MCF 10A (cell line): ENCODE measurements at regions of chr2 and their contacts with region 1.

Region 1: DNA sequence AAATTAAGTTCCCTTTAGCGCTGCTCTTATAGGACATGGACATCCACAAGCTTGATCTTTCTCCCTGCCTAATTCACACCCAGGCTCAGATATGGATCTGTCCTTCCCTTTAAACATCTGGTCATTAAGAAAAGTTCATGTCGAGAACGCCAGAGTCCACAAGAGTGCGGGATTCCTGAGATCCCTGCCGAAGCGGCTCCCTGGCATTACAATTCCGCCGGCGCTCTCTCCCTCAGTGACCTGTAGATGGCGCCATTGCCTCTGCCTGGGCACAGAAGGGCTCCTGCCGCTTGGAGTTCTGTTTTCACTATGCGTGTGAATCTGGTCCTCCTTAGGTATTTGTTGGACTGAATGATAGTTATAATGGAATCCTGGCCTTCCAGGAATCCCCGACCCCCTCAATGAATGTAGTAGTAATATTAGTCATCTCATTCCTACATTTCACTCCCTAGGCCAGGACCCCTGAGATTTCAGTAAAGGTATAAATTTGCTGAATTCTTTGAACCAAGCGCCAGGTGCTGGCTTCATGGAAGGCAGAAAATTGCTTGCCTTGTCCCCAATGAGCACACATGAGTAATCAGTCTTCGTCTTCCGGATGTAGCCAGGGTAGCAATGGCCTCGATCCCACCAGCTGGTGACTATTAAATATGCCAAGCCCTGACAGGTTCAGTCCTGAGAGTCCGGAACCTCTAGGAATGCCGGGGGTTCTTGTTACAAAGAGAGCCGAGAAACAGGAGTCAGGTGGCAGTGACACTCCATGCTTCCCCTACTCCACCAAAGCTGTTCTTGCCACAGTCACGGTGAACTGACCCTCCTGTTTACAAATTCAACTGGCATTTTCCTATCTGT is 26.4 kb upstream of the CD207 start:
- DNase-seq: peak; percentile 83
- H3K4me3 Mint-ChIP-seq: no peak overlapping the region
- H3K27ac Mint-ChIP-seq: peak overlapping the region; percentile 17
- H3K4me1 Mint-ChIP-seq: peaks cover 6% of the 10 kb centered on the region
- H3K27me3 Mint-ChIP-seq: peaks cover 80% of the 10 kb centered on the region
- CTCF ChIP-seq: peak; percentile 94

Region 2: DNA sequence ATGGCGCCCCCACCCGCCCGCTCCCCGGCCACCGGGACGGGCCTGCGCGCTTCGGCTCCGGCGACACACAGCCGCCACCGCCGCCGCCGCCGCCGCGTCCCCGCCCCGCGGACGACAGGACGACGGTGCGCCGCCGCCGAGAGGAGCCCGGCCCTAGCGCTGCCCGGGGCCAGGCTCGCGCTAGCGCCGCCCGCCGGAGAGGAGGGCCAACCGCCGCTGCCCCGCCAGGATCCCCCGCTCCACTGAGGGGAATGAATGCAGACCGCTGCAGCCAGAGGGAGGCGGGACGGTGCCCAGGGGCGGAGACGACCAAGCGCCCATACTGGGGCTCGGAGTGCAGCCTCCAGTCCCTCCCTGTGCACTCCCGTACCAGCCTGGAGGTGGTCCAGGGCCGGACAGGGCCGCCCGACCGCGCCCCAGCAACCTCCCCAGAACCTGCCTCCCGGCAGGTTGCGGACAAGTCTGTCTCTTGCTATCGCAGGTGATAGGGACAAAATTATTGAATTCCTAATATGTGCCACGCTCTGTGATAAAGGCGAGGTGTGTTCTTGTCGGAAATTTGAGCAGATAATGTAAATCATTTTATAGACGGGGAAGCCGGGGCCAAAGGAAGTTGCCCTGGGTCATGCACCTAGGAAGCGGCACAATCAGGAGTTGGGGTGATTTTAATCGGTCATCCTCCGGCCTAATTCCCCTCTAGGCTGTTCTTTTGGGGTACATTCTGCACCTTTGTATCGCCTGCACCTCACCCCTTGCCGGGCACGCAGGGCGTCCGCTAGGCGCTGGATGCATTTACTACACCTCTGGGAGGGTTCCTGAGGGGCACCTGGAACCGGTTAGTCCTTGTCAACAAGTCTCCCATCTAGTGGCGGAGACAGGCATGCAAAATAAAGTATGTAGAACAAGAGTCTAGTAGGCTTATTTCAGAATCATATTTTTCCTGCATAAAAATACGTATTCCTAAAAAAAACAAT is 133.0 kb after region 1 on chr2 and contains the start of gene TEX261:
- CTCF ChIA-PET with region 1: no interaction called
- POLR2A ChIA-PET with region 1: no interaction called
- intact Hi-C with region 1: loop called (anchors 5 kb)
- DNase-seq: peak; percentile 84
- H3K4me3 Mint-ChIP-seq: peak within 1 kb of the TSS; percentile 98
- H3K27ac Mint-ChIP-seq: peak within 1 kb of the TSS; percentile 91
- H3K4me1 Mint-ChIP-seq: peaks cover 18% of the 10 kb centered on the region
- H3K27me3 Mint-ChIP-seq: no peaks in the 10 kb centered on the region
- CTCF ChIP-seq: peak; percentile 61
- total RNA-seq, gene TEX261: 52.3 and 63.2 TPM in 2 replicates

Region 3: GRCh38 chr2:72254831-72255447 is 1392.9 kb after region 1 on chr2:
- CTCF ChIA-PET with region 1: no interaction called
- POLR2A ChIA-PET with region 1: no interaction called
- intact Hi-C with region 1: no loop called
- DNase-seq: no peak
- H3K4me3 Mint-ChIP-seq: no peak overlapping the region
- H3K27ac Mint-ChIP-seq: no peak overlapping the region
- H3K4me1 Mint-ChIP-seq: no peaks in the 10 kb centered on the region
- H3K27me3 Mint-ChIP-seq: no peaks in the 10 kb centered on the region
- CTCF ChIP-seq: no peak